T-cell (primary cell): ENCODE measurements at regions of chr7 and their contacts with region 1.

Region 1: GRCh38 chr7:99040104-99040958 is 103.6 kb downstream of the SMURF1 start:
- DNase-seq: peak; percentile 10 to 82 (median 46)
- ATAC-seq: peak; percentile 59 to 80 (median 73)
- H3K4me3 ChIP-seq: no peak overlapping the region
- H3K4me3 Mint-ChIP-seq: no peak overlapping the region
- H3K27ac ChIP-seq: no peak overlapping the region
- H3K27ac Mint-ChIP-seq: peak overlapping the region; percentile 39 to 61
- H3K4me1 ChIP-seq: peaks cover 0 to 5% of the 10 kb centered on the region in 2 experiments
- H3K4me1 Mint-ChIP-seq: no peaks in the 10 kb centered on the region
- H3K27me3 ChIP-seq: no peaks in the 10 kb centered on the region
- H3K27me3 Mint-ChIP-seq: no peaks in the 10 kb centered on the region

Region 2: GRCh38 chr7:98902523-98902922 is 137.8 kb before region 1 on chr7:
- CTCF ChIA-PET with region 1: no interaction called
- POLR2A ChIA-PET with region 1: interaction called in 1 of 2 experiments, 10 read pairs
- DNase-seq: no peak
- ATAC-seq: no peak
- H3K4me3 ChIP-seq: no peak overlapping the region
- H3K4me3 Mint-ChIP-seq: no peak overlapping the region
- H3K27ac ChIP-seq: no peak overlapping the region
- H3K27ac Mint-ChIP-seq: no peak overlapping the region
- H3K4me1 ChIP-seq: no peaks in the 10 kb centered on the region
- H3K4me1 Mint-ChIP-seq: peaks cover 0 to 6% (median 0%) of the 10 kb centered on the region in 3 donors
- H3K27me3 ChIP-seq: no peaks in the 10 kb centered on the region
- H3K27me3 Mint-ChIP-seq: no peaks in the 10 kb centered on the region

Region 3: DNA sequence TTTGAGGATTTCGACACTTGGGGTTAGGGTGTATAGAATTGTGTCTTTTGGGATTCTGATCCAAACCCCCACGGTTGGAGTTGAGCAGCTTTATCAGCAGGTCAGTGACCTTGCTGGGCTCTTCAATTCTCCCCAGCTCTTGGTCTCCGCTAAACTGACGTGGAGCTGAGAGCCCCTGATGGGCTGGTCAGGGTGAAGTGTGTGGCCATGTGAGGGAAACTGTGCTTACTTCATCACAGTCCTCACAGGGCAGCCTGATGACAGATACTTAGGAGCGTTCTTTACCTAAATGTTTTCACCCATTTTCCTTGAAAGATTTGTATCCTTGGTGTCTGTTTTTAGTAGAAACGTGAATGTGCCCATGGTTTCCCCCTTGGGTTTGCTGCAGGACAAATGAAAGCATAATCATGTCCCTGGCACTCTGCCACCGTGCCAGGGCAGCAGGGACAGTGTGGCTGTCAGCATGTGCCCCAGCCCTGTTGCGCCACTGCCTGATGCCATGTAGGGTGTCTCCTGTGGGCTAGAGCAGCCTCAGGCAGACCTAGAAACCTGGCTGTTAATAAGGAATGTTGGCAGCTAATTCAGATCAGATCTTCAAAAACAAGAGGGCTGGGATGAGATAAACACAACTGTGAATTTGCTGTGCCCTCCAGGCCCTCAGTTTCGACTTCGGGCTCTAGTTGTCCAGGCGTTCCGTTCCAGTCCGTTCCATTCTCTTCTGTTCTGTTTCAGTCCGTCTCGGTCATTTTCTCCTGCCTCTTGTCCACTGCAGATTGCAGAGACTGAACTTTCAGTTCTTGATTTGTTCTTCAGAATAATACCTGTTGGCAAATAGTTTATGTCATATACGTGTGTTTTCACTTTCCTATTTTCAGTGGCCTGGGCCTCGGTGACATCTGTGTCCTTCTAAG is 65.2 kb before region 1 on chr7:
- CTCF ChIA-PET with region 1: no interaction called
- POLR2A ChIA-PET with region 1: no interaction called
- DNase-seq: no peak
- ATAC-seq: no peak
- H3K4me3 ChIP-seq: no peak overlapping the region
- H3K4me3 Mint-ChIP-seq: no peak overlapping the region
- H3K27ac ChIP-seq: no peak overlapping the region
- H3K27ac Mint-ChIP-seq: no peak overlapping the region
- H3K4me1 ChIP-seq: no peaks in the 10 kb centered on the region
- H3K4me1 Mint-ChIP-seq: no peaks in the 10 kb centered on the region
- H3K27me3 ChIP-seq: no peaks in the 10 kb centered on the region
- H3K27me3 Mint-ChIP-seq: no peaks in the 10 kb centered on the region

Region 4: DNA sequence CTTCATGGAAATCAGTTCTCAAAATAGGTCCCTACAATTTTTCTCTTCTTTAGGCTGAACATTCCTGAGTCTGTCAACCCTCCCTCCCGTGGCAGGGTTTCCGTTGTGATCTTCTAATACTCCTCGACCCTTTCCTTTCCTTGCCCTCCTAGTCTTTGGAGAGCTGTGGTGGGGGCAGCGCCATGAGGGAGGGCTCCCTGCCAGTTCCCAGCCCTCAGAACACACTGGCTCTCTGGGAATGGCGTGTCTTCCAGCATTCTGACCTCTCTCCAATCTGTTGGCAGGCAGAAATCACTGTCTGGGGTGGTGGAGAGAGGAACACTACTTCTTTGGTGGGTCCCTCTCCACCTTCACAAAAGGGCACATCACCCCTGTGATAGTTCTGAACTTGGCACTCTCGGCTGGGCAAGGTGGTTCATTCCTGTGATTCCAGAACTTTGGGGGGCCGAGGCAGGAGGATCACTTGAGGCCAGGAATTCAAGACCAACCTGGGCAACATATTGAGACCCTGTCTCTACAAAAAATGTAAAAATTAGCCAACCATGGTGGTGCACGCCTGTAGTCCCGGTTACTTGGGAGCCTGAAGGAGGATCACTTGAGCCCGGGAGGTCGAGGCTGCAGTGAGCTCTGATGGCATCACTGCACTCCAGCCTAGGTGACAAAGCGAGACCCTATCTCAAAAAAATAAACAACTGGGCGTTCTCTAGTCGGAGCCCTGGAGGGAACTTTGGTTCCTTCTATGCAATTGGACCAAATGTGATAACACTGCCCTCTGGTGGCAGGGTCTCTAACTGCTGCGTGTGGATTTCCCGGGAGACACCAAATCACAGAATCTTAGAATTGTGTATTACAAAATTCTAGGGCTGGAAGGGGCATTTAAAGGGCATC is 272.2 kb after region 1 on chr7:
- CTCF ChIA-PET with region 1: interaction called, 5 to 14 read pairs
- POLR2A ChIA-PET with region 1: no interaction called
- DNase-seq: peak; percentile 19 to 84 (median 64)
- ATAC-seq: peak; percentile 60 to 70 (median 66)
- H3K4me3 ChIP-seq: no peak overlapping the region
- H3K4me3 Mint-ChIP-seq: peak overlapping the region in 2 of 3 donors; percentile 13 to 27
- H3K27ac ChIP-seq: no peak overlapping the region
- H3K27ac Mint-ChIP-seq: no peak overlapping the region
- H3K4me1 ChIP-seq: peaks cover 0 to 4% of the 10 kb centered on the region in 2 experiments
- H3K4me1 Mint-ChIP-seq: peaks cover 0 to 8% (median 3%) of the 10 kb centered on the region in 3 donors
- H3K27me3 ChIP-seq: peaks cover 0 to 27% of the 10 kb centered on the region in 2 experiments
- H3K27me3 Mint-ChIP-seq: peaks cover 4 to 7% of the 10 kb centered on the region in 2 donors